RWPE1 (cell line): ENCODE measurements at regions of chr1 and their contacts with region 1.

Region 1: DNA sequence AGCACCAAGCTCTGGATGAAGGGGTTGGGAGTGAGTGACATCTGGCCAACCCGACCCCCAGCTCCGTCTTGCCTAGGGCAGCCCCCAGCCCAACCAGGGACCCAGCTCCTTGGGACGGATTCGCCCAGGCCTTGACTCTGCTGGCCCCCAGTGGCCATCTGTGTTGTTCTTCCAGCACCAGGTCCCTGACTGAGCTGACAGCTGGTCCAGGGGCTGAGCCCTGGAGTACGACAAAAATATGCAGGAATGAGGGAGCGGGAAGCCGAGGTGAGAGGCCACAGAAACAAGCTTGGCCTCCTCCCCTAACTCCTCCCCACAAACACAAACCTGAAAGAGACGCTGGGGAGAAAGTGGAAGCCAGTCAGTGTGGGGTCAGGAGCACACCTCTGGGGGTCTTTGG is 55.0 kb upstream of the PAX7 start:
- DNase-seq: peak; percentile 76
- H3K27ac ChIP-seq: no peak overlapping the region
- CTCF ChIP-seq: peak; percentile 87

Region 2: GRCh38 chr1:18564676-18565075 is 10.9 kb before region 1 on chr1:
- CTCF ChIA-PET with region 1: interaction called, 18 read pairs
- POLR2A ChIA-PET with region 1: no interaction called
- DNase-seq: no peak
- H3K27ac ChIP-seq: no peak overlapping the region
- CTCF ChIP-seq: no peak